Adrenal gland (tissue), 19 donors: ENCODE measurements at regions of chr1 and their contacts with region 1.

Region 1: DNA sequence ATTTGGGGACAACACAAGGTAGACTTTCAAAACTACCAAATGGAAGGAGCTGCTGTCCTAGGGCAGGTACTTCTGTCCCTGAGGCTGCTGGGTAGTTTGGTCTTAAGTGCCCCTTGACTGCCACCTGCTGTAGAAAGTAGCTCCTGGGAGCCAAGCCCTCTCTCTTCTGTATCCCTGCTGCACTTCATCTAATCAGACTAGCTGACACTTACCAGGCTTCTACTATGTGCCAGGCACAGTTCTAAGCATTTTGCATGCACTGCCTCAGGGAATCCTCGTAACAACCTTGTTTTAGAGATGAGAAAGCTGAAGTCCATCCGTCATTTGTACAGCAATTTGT is 15.9 kb upstream of the SRSF4 start:
- DNase-seq: peak in 1 of 7 donors; percentile 72
- H3K4me3 ChIP-seq: no peak overlapping the region
- H3K27ac ChIP-seq: no peak overlapping the region
- H3K4me1 ChIP-seq: peaks cover 7 to 9% of the 10 kb centered on the region in 2 donors
- H3K27me3 ChIP-seq: no peaks in the 10 kb centered on the region
- CTCF ChIP-seq: peak in 1 of 6 experiments; percentile 11
- POLR2A ChIP-seq: no peak

Region 2: DNA sequence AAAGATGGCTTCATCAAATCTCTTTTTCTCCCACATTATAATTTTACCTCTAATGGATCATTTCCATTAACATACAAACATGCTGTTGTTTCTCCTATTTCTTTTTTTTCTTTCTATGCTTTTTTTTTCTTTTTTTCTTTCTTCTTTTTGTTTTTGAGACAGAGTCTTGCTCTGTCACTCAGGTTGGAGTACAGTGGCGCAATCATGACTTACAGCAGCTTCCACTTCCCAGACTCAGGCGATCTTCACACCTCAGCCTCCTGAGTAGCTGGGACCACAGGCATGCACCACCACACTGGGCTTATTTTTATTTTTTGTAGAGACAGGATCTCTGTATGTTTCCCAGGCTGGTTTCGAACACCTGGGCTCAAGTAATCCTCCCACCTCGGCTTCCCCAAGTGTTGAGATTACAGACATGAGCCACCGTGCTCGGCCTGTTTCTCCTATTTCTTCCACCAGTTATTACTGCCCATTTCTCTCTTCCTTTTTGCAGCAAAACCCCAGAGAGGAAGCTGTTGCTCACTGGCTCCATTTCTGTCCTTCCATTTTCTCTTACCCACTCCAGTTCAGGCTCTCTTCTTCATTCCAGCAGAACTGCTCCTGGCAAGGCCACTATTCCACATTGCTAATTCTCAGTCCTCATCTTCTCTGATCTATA is 417.7 kb before region 1 on chr1:
- intact Hi-C with region 1: loop called in 1 of 2 experiments (anchors 10 kb)
- DNase-seq: peak in 1 of 7 donors; percentile 13
- H3K4me3 ChIP-seq: no peak overlapping the region
- H3K27ac ChIP-seq: peak overlapping the region in 3 of 5 donors; percentile 11 to 68 (median 49)
- H3K4me1 ChIP-seq: peaks cover under 1 to 24% of the 10 kb centered on the region in 2 donors
- H3K27me3 ChIP-seq: no peaks in the 10 kb centered on the region
- CTCF ChIP-seq: no peak
- POLR2A ChIP-seq: no peak

Region 3: DNA sequence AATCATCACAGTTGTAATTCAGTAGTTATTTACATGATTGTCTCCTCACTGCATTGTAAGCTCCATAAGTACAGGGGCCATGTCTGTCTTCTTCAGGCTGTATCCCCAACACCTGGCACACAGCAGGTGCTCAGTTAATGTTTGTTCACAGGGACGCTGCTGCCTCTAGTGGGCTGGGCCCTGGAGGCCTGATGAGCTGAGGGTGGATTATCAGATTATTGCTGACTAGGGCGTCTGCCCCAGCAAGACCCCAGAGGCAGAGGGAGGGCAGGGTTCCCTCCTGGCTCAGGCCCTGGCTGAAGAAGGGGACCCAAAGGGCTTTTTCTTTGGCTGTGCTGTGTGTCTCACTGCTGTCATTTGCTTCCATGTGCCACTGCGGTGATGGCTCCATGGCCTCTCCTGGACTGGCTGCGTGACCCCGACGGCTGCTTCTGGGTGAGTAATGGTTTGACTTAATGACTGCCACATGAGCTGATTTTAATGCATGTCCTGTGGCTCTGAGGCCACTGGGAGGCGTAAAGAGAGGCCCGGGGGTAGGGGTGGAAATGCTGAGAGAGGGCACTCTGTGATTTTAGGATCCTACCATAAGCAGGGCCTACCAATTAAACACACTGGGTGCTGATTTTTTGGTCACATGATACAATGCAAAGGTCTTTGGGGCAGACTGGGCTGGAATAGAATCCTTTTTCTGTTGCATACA is 304.0 kb before region 1 on chr1:
- intact Hi-C with region 1: no loop called
- DNase-seq: peak in 2 of 7 donors; percentile 24 to 27
- H3K4me3 ChIP-seq: no peak overlapping the region
- H3K27ac ChIP-seq: peak overlapping the region in 1 of 5 donors; percentile 40
- H3K4me1 ChIP-seq: peaks cover 5 to 10% of the 10 kb centered on the region in 2 donors
- H3K27me3 ChIP-seq: no peaks in the 10 kb centered on the region
- CTCF ChIP-seq: peak in 3 of 6 experiments; percentile 18 to 27 (median 19)
- POLR2A ChIP-seq: no peak